OCI-LY7 (cell line): ENCODE measurements at regions of chr15 and their contacts with region 1.

Region 1: GRCh38 chr15:78108299-78109084 is 16.1 kb downstream of the SH2D7 start:
- DNase-seq: peak; percentile 90
- H3K4me3 ChIP-seq: no peak overlapping the region
- H3K27ac ChIP-seq: no peak overlapping the region
- H3K4me1 ChIP-seq: no peaks in the 10 kb centered on the region
- CTCF ChIP-seq: peak; percentile 96

Region 2: GRCh38 chr15:77907824-77908751 is 200.4 kb before region 1 on chr15:
- CTCF ChIA-PET with region 1: no interaction called
- POLR2A ChIA-PET with region 1: no interaction called
- intact Hi-C with region 1: loop called (anchors 1 kb)
- DNase-seq: peak; percentile 77
- H3K4me3 ChIP-seq: no peak overlapping the region
- H3K27ac ChIP-seq: no peak overlapping the region
- H3K4me1 ChIP-seq: no peaks in the 10 kb centered on the region
- CTCF ChIP-seq: peak; percentile 77

Region 3: DNA sequence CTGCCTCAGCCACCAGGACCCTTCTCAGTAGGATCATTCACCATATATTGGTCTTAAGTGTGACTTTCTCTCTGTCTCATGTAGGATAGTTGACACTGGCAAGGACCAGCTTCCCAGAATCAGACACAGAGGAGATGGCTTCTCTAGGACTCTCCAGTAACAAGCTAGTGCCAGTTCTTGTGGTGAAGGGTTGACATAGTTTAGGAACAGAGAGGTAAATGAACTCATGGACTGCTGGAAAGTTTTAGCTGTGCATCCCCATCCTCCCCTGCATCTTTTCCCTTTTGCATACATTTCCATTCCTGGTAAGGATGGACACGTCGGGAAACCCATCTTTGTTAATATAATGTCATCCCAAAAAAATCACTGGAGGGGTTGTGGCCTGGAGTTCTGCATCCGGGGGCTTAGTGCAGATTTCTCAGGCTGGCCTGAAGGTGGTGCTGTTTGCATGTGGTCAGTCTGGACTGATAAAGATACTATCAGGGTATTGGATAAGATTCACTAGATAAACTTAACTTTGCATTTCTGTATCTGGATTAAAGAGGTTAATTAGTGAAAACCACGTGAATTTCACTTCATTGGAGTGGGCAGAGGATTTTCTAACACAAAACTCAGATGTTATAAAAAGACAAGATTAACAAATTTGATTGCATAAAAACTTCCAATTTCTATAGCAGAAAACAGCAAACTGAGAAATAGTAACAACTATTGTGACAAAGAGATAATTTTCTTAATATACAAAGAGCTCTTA is 141.8 kb before region 1 on chr15:
- CTCF ChIA-PET with region 1: interaction called, 4 read pairs
- POLR2A ChIA-PET with region 1: interaction called, 3 read pairs
- intact Hi-C with region 1: loop called (anchors 1 kb)
- DNase-seq: peak; percentile 65
- H3K4me3 ChIP-seq: no peak overlapping the region
- H3K27ac ChIP-seq: no peak overlapping the region
- H3K4me1 ChIP-seq: peaks cover 7% of the 10 kb centered on the region
- CTCF ChIP-seq: peak; percentile 100

Region 4: GRCh38 chr15:78195735-78196201 is 87.3 kb after region 1 on chr15:
- CTCF ChIA-PET with region 1: no interaction called
- POLR2A ChIA-PET with region 1: interaction called, 3 read pairs
- intact Hi-C with region 1: loop called (anchors 1 kb)
- DNase-seq: peak; percentile 65
- H3K4me3 ChIP-seq: no peak overlapping the region
- H3K27ac ChIP-seq: no peak overlapping the region
- H3K4me1 ChIP-seq: no peaks in the 10 kb centered on the region
- CTCF ChIP-seq: peak; percentile 95

Region 5: DNA sequence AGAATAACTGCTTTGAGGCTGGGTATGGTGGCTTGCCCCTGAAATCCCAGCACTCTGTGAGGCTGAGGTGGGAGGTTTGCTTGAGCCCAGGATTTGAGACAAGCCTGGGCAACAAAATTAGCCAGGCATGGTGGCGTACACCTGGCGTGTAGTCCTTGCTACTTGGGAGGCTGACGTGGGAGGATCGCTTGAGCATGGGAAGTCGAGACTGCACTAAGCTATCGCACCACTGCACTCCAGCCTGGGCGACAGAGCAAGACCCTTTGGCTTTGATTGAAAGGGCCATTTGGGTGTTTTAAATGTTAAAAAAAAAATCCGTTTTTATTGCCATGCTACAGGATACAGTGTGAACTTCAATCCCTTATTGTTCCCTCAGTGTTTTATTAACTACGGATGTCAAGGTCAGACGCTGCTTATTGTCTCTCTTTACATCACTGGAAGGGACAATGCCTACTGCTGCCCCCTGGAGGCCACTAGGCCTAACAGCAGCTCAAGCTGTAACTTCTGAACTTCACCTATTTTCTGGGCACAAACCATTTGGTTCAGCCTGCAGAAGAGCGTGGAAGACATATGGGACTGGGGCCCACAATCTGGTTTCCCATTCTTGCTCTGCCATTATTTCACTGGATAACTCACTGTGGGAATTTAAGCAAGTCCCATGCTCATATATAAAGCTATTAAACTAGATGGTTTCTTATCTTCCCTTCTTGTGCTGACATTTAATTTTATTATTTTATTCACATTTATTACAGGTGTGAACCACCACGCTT is 314.3 kb after region 1 on chr15:
- CTCF ChIA-PET with region 1: no interaction called
- POLR2A ChIA-PET with region 1: no interaction called
- intact Hi-C with region 1: loop called (anchors 5 kb)
- DNase-seq: peak; percentile 63
- H3K4me3 ChIP-seq: no peak overlapping the region
- H3K27ac ChIP-seq: no peak overlapping the region
- H3K4me1 ChIP-seq: peaks cover 5% of the 10 kb centered on the region
- CTCF ChIP-seq: peak; percentile 96